ENCODE measurements at regions of chr12 and their contacts with region 1.

Region 1: DNA sequence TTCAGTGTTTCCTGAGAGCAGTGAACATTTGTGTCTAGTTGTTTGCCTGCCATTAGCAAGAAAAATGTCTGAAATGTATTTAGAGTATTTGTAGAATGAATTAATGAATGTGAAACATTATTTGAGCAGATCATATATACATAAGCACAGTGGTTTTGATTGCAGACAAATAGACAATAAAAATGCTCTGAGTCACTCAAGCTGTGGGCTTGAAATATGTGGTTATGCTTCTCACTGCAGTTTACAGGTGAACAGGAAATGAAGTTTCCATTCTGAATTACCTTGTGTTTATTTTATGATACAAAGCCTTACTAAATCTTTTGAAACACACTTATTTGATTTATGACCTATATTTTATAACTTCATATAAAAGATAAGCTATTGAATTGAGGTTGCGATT is 827.7 kb downstream of the TMTC2 start:
- DNase-seq: peak; percentile 93
- ATAC-seq: peak; percentile 97
- H3K4me3 ChIP-seq: no peak overlapping the region
- H3K27ac ChIP-seq: no peak overlapping the region
- H3K4me1 ChIP-seq: peaks cover 23% of the 10 kb centered on the region
- H3K27me3 ChIP-seq: no peaks in the 10 kb centered on the region
- CTCF ChIP-seq: no peak

Region 2: DNA sequence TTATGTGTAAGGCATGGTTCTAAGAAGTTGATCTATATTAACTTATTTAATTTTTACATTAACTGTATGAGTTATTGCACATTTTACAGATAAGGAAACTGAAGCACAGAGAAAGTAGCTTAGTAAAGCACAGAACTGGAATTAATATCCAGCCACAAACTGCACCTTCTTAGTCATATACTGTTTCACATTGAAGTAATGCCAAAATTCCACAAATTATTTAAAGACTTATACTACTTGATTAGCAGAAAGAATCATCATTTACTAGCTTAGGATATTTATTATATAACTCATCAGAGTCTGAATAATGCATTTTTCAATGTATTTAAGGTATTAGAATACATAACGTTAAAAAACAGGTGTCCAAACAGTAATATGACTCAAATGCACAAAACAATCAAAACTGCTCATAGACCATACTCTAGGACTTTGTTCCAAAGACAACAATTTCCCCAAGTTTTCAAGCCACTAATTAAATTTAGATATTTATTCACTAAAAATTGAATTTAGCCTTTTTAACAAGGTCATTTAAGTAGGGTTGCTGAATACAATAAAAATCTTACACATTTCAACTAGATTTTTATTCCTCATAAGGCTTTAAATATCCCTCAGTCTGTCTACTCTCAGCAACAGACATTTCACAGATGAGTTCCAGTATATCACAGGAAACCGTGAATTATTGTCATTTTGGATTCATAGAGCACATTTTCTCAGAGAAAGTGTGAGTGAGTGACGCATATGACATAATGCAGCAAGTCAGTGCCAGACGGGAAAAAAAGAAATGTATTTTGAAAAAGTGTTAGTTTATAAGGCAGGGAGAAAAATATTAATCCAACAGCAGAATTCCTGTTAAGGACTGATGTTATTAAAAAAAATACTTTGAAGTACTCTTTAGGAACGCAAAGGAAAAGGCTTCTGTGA is 45.1 kb before region 1 on chr12:
- CTCF ChIA-PET with region 1: no interaction called
- POLR2A ChIA-PET with region 1: no interaction called
- intact Hi-C with region 1: loop called (anchors 1 kb)
- DNase-seq: peak; percentile 84
- ATAC-seq: peak; percentile 93
- H3K4me3 ChIP-seq: no peak overlapping the region
- H3K27ac ChIP-seq: peak overlapping the region; percentile 52
- H3K4me1 ChIP-seq: peaks cover 16% of the 10 kb centered on the region
- H3K27me3 ChIP-seq: no peaks in the 10 kb centered on the region
- CTCF ChIP-seq: no peak

Region 3: GRCh38 chr12:83807871-83808270 is 293.5 kb after region 1 on chr12:
- CTCF ChIA-PET with region 1: no interaction called
- POLR2A ChIA-PET with region 1: no interaction called
- intact Hi-C with region 1: loop called (anchors 1 kb)
- DNase-seq: no peak
- ATAC-seq: no peak
- H3K4me3 ChIP-seq: no peak overlapping the region
- H3K27ac ChIP-seq: no peak overlapping the region
- H3K4me1 ChIP-seq: peaks cover 19% of the 10 kb centered on the region
- H3K27me3 ChIP-seq: no peaks in the 10 kb centered on the region
- CTCF ChIP-seq: no peak

Region 4: DNA sequence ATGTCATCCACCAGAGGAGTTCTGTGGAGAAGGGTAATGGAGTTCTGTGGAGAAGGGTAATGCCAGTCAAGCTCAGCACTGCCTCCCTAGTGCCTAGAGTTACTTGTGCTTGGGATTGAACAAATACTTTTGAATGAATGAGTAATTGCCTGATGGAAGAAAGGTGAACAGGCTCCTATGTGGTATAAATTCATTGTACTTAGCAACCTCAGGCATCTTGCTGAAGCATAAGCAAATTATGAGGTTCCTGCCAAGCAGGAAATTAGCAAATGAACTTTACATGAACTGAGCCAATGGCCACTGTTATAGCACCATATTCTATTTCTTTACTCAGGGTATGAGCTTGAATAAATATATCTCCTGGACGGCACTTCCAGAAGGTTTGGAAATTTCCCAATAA is 351.1 kb after region 1 on chr12:
- CTCF ChIA-PET with region 1: no interaction called
- POLR2A ChIA-PET with region 1: no interaction called
- intact Hi-C with region 1: loop called (anchors 5 kb)
- DNase-seq: peak; percentile 79
- ATAC-seq: peak; percentile 60
- H3K4me3 ChIP-seq: no peak overlapping the region
- H3K27ac ChIP-seq: peak overlapping the region; percentile 66
- H3K4me1 ChIP-seq: peaks cover 33% of the 10 kb centered on the region
- H3K27me3 ChIP-seq: no peaks in the 10 kb centered on the region
- CTCF ChIP-seq: 0 out of 2 replicates have a peak, but pooled peaks have one; percentile 9

Measured in PC-3 (cell line).